PC-3 (cell line): ENCODE measurements at regions of chr5 and their contacts with region 1.

Region 1: GRCh38 chr5:143968011-143968878 is 156.3 kb downstream of the HMHB1 start:
- DNase-seq: peak; percentile 77
- ATAC-seq: peak; percentile 47
- H3K4me3 ChIP-seq: no peak overlapping the region
- H3K27ac ChIP-seq: peak overlapping the region; percentile 51
- H3K4me1 ChIP-seq: peaks cover 37% of the 10 kb centered on the region
- H3K27me3 ChIP-seq: no peaks in the 10 kb centered on the region
- CTCF ChIP-seq: peak; percentile 74

Region 2: DNA sequence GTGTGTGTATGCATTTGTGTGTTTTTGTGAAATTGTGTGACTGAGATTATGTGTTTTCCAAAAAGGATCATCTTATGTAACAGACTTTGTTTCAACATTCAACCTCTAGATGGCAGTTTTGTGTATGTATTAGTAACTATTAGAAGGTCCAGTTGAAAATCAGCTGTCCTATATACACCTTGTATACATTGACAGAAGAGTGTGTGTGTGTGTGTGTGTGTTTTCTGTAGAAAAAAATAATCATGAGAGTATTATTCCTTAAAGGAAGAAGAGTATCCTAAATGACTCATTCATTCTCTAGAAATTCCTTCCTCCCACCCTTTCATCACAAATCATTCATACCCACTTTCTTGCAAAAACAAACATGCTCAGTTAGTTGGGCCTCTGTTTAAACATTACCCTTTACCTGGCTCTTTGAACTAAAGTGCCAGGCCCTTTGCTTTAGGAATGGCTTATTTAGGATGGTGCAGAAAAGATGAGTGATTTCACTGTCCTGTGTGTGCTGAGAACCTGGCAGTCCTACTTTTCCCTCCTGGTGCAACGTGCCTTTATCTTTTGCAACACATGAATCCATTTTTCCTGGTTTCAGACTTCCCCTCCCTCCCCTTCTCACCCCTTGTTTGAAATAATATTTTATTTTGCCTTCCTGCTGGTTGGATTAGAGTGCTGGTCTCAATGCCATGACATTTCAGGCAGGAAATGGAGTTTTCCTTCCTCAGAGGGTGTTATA is 1045.9 kb before region 1 on chr5:
- CTCF ChIA-PET with region 1: no interaction called
- POLR2A ChIA-PET with region 1: no interaction called
- intact Hi-C with region 1: loop called (anchors 10 kb)
- DNase-seq: peak; percentile 64
- ATAC-seq: peak; percentile 64
- H3K4me3 ChIP-seq: no peak overlapping the region
- H3K27ac ChIP-seq: peak overlapping the region; percentile 67
- H3K4me1 ChIP-seq: peaks cover 31% of the 10 kb centered on the region
- H3K27me3 ChIP-seq: no peaks in the 10 kb centered on the region
- CTCF ChIP-seq: peak; percentile 58

Region 3: DNA sequence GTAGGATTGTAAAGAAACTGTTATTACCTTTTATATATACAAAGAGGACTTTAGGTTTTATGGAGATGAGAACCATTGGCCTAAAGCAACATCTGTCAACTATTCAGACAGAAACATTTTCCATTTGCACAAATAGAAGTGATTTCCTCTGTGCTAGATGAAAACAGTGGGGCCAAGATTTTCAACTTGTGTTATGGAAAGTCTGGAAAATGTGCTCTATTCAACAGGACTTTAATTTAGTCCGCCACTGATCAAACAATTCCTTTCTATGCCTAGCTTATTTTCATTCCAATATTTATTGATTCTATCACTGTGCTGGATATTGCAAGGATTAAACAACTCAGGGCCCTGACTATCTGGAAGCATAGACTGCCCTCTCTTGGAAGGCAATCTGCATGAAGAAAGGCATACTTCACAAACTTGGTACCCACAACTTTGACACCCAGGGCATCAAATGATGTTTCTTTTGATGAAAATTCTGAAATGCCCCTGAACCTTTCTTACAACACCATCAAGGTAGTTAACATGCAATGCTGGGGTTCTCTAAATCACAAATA is 282.9 kb before region 1 on chr5:
- CTCF ChIA-PET with region 1: no interaction called
- POLR2A ChIA-PET with region 1: no interaction called
- intact Hi-C with region 1: loop called (anchors 5 kb)
- DNase-seq: peak; percentile 25
- ATAC-seq: no peak; the same call in 1 of the 2 replicates
- H3K4me3 ChIP-seq: no peak overlapping the region
- H3K27ac ChIP-seq: no peak overlapping the region
- H3K4me1 ChIP-seq: peaks cover 14% of the 10 kb centered on the region
- H3K27me3 ChIP-seq: no peaks in the 10 kb centered on the region
- CTCF ChIP-seq: peak; percentile 58

Region 4: GRCh38 chr5:143896966-143897365 is 71.3 kb before region 1 on chr5:
- CTCF ChIA-PET with region 1: no interaction called
- POLR2A ChIA-PET with region 1: no interaction called
- intact Hi-C with region 1: loop called (anchors 1 kb)
- DNase-seq: peak; percentile 49
- ATAC-seq: peak; percentile 48
- H3K4me3 ChIP-seq: no peak overlapping the region
- H3K27ac ChIP-seq: peak overlapping the region; percentile 73
- H3K4me1 ChIP-seq: peaks cover 36% of the 10 kb centered on the region
- H3K27me3 ChIP-seq: no peaks in the 10 kb centered on the region
- CTCF ChIP-seq: no peak

Region 5: DNA sequence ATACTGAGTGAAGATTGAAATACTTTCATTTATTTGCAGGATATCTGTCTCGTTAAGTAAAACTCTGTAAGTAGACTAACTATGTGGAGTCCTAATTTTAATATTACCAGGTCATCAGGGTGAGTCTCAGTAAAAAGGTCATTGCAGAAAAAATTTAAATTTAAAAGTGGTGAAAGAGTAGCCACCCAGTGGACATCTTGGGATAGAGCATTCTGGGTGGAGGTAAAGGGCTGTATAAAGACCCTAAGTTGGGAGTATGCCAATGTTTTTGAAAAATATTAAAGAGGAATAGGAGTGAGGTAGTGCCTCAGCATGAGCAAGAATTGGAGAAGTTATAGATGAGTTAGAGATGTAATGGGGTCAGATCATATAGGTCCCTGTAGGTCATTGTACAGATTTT is 10.8 kb before region 1 on chr5:
- CTCF ChIA-PET with region 1: no interaction called
- POLR2A ChIA-PET with region 1: no interaction called
- intact Hi-C with region 1: no loop called
- DNase-seq: no peak
- ATAC-seq: no peak
- H3K4me3 ChIP-seq: no peak overlapping the region
- H3K27ac ChIP-seq: no peak overlapping the region
- H3K4me1 ChIP-seq: no peaks in the 10 kb centered on the region
- H3K27me3 ChIP-seq: no peaks in the 10 kb centered on the region
- CTCF ChIP-seq: peak; percentile 62

Region 6: DNA sequence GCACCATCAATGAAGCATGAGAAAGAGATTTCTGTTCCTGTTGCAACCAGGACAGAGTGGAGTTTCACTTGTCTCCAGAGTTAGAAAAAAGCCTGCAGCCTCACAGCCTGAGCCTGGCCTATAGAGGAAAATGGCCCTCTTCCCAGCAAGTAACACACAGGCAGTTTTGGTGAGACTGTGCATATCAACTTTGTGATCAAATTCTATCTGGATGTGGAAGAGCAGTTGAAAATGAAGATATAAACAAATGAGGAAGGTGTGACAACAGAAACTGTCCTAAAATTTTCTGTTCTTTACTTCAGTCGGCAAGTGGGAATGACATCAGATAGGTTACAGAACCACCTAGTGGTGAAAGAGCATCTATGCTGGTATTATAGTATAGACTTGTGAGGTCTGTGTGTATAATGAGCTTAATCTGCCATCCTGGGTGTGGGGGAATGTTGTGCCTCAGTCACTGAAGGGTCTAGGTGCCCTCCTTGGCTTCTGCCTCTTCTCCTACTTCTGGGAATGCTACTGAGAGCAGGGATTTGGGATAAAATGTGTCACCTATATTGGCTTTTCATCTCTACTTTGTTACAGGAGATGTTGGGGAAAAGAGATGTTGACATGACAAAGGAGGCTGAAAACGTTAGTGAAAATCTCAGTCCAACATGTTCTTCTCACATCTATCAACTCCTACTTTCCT is 174.0 kb after region 1 on chr5:
- CTCF ChIA-PET with region 1: interaction called, 5 read pairs
- POLR2A ChIA-PET with region 1: no interaction called
- intact Hi-C with region 1: loop called (anchors 2 kb)
- DNase-seq: peak; percentile 55
- ATAC-seq: peak; percentile 91
- H3K4me3 ChIP-seq: no peak overlapping the region
- H3K27ac ChIP-seq: no peak overlapping the region
- H3K4me1 ChIP-seq: peaks cover 7% of the 10 kb centered on the region; the same call in 1 of the 2 replicates
- H3K27me3 ChIP-seq: no peaks in the 10 kb centered on the region
- CTCF ChIP-seq: peak; percentile 81